ENCODE measurements at regions of chr5 and their contacts with region 1.

Region 1: DNA sequence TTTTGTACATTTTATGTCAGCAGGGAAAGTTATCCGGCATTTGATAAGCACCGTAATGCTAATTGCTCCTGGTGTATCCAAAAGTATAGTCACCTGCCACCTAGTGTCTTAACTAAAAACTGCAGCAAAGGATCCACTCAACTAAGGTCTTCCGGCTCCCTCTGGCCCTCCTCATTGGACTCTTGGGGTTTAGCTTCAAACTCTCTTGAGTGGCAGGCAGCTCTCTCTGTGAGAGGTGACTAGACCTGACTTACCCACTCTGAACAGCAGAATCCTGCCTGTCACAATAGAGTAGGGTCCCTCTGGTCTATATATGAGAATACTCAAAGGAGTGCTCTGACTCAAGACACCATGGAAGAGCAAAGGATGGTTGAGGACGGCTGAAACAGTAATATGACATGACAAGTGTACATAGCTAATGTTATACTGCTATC is 60.3 kb upstream of the CAST start:
- DNase-seq: peak; percentile 77
- H3K4me3 Mint-ChIP-seq: no peak overlapping the region
- H3K27ac Mint-ChIP-seq: no peak overlapping the region
- H3K4me1 Mint-ChIP-seq: peaks cover 4% of the 10 kb centered on the region
- H3K27me3 Mint-ChIP-seq: peaks cover 18% of the 10 kb centered on the region

Region 2: DNA sequence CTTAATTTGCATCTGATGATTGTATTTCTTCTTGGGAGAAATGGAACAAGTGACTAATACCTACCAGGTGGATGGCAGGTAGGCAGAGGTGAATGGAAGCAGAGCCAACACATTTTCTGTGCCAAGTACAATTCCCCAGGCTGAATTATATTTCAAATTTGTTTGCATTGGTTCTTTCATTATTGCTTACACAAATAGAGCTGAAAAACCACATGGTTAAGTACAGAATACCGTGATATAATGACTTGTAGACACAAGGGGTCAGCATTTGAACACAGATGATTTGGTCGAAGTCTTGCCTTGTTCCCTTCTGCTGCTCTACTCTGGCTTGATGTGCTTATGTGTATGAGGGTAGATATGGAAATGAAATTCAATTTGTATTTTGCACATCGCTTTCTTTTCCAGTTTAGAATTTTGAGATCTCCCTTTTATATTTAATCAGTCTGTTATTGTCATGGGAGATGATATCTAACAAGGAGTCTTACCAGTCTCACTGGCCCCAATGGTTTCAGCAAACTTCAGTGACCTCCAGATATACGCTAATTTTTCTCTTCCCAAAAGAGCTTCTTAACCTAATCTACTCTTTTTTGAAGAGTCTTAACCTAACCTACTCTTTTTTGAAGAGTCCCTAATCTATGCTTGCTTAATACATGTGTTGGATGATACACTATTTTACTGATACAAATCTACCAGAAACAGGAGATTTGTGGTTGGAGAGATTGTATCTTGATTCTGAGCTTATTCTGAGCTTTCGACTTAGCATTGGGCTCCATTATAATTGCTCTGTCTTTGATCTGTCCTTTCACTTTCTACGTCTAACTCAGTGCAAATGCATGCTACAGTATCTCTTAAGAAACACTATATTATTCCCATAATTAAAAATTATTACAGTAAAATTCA is 256.9 kb before region 1 on chr5:
- CTCF ChIA-PET with region 1: interaction called, 17 read pairs
- POLR2A ChIA-PET with region 1: no interaction called
- DNase-seq: peak; percentile 61
- H3K4me3 Mint-ChIP-seq: peak overlapping the region; percentile 6
- H3K27ac Mint-ChIP-seq: peak overlapping the region; percentile 2
- H3K4me1 Mint-ChIP-seq: peaks cover 24% of the 10 kb centered on the region
- H3K27me3 Mint-ChIP-seq: peaks cover 17% of the 10 kb centered on the region

Measured in activated CD4-positive, alpha-beta T cell treated with anti-CD3 and anti-CD28 coated beads, Interleukin-2, amount 10 ng/mL, durations not matched to agents 7 days and 5 days (primary cell).